Caco-2 (cell line): ENCODE measurements at regions of chr11 and their contacts with region 1.

Region 1: GRCh38 chr11:15650105-15650938 is 535.6 kb downstream of the INSC start:
- DNase-seq: peak; percentile 95 to 98
- H3K4me3 ChIP-seq: peak overlapping the region; percentile 33
- H3K4me3 Mint-ChIP-seq: peak overlapping the region; percentile 49
- H3K27ac Mint-ChIP-seq: no peak overlapping the region
- H3K4me1 ChIP-seq: peaks cover 36% of the 10 kb centered on the region
- H3K4me1 Mint-ChIP-seq: peaks cover 21% of the 10 kb centered on the region
- H3K27me3 ChIP-seq: no peaks in the 10 kb centered on the region
- H3K27me3 Mint-ChIP-seq: peaks cover 2% of the 10 kb centered on the region
- CTCF ChIP-seq: peak; percentile 96 to 98

Region 2: GRCh38 chr11:15276621-15277020 is 373.7 kb before region 1 on chr11:
- CTCF ChIA-PET with region 1: no interaction called
- POLR2A ChIA-PET with region 1: no interaction called
- intact Hi-C with region 1: loop called (anchors 5 kb)
- DNase-seq: peak in 1 of 2 experiments; percentile 13
- H3K4me3 ChIP-seq: no peak overlapping the region
- H3K4me3 Mint-ChIP-seq: no peak overlapping the region
- H3K27ac Mint-ChIP-seq: no peak overlapping the region
- H3K4me1 ChIP-seq: no peaks in the 10 kb centered on the region
- H3K4me1 Mint-ChIP-seq: no peaks in the 10 kb centered on the region
- H3K27me3 ChIP-seq: no peaks in the 10 kb centered on the region
- H3K27me3 Mint-ChIP-seq: peaks cover 2% of the 10 kb centered on the region
- CTCF ChIP-seq: peak; percentile 52

Region 3: DNA sequence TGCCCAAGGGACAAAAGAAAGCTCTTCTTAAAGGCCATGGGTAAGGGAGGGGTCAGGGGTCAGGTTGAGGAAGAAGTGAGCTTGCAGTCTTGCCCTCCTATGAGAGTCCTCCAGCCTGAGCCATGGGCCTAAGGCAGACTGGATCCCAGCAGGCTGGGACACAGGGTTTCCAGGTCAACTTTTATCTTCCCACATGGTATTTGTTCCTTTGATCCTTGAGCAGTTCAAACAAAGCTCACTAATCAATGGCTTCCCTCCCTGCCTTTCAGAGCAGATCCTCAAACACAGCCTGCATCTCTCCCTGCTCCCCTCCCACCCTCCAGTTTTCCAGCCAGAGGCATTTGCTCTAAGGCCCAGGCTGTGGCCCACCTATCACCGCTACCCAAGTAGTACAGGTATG is 53.7 kb after region 1 on chr11:
- CTCF ChIA-PET with region 1: no interaction called
- POLR2A ChIA-PET with region 1: no interaction called
- intact Hi-C with region 1: loop called (anchors 5 kb)
- DNase-seq: peak; percentile 65 to 66
- H3K4me3 ChIP-seq: no peak overlapping the region
- H3K4me3 Mint-ChIP-seq: no peak overlapping the region
- H3K27ac Mint-ChIP-seq: no peak overlapping the region
- H3K4me1 ChIP-seq: peaks cover 33% of the 10 kb centered on the region
- H3K4me1 Mint-ChIP-seq: peaks cover 11% of the 10 kb centered on the region
- H3K27me3 ChIP-seq: no peaks in the 10 kb centered on the region
- H3K27me3 Mint-ChIP-seq: no peaks in the 10 kb centered on the region
- CTCF ChIP-seq: no peak

Region 4: GRCh38 chr11:15819679-15820286 is 169.5 kb after region 1 on chr11:
- CTCF ChIA-PET with region 1: interaction called, 3 read pairs
- POLR2A ChIA-PET with region 1: no interaction called
- intact Hi-C with region 1: loop called (anchors 2 kb)
- DNase-seq: peak; percentile 68 to 80
- H3K4me3 ChIP-seq: no peak overlapping the region
- H3K4me3 Mint-ChIP-seq: no peak overlapping the region
- H3K27ac Mint-ChIP-seq: no peak overlapping the region
- H3K4me1 ChIP-seq: no peaks in the 10 kb centered on the region
- H3K4me1 Mint-ChIP-seq: no peaks in the 10 kb centered on the region
- H3K27me3 ChIP-seq: no peaks in the 10 kb centered on the region
- H3K27me3 Mint-ChIP-seq: peaks cover 3% of the 10 kb centered on the region
- CTCF ChIP-seq: peak; percentile 90 to 95

Region 5: GRCh38 chr11:16613512-16614381 is 963.4 kb after region 1 on chr11:
- CTCF ChIA-PET with region 1: interaction called, 8 read pairs
- POLR2A ChIA-PET with region 1: interaction called, 3 read pairs
- intact Hi-C with region 1: loop called (anchors 2 kb)
- DNase-seq: peak; percentile 89 to 91
- H3K4me3 ChIP-seq: peak overlapping the region; percentile 55
- H3K4me3 Mint-ChIP-seq: peak overlapping the region; percentile 81
- H3K27ac Mint-ChIP-seq: peak overlapping the region; percentile 68
- H3K4me1 ChIP-seq: 0 out of 2 replicates have a peak, but pooled peaks cover 5% of the 10 kb centered on the region
- H3K4me1 Mint-ChIP-seq: peaks cover 7% of the 10 kb centered on the region
- H3K27me3 ChIP-seq: no peaks in the 10 kb centered on the region; the same call in 1 of the 2 replicates
- H3K27me3 Mint-ChIP-seq: peaks cover 2% of the 10 kb centered on the region
- CTCF ChIP-seq: peak; percentile 82 to 86